ENCODE measurements at regions of chr7 and their contacts with region 1.

Region 1: GRCh38 chr7:158903897-158904541 is 47.7 kb downstream of the DYNC2I1 start:
- DNase-seq: no peak
- H3K4me3 ChIP-seq: no peak overlapping the region
- H3K27ac ChIP-seq: no peak overlapping the region
- H3K4me1 ChIP-seq: no peaks in the 10 kb centered on the region
- H3K27me3 ChIP-seq: no peaks in the 10 kb centered on the region
- CTCF ChIP-seq: no peak

Region 2: DNA sequence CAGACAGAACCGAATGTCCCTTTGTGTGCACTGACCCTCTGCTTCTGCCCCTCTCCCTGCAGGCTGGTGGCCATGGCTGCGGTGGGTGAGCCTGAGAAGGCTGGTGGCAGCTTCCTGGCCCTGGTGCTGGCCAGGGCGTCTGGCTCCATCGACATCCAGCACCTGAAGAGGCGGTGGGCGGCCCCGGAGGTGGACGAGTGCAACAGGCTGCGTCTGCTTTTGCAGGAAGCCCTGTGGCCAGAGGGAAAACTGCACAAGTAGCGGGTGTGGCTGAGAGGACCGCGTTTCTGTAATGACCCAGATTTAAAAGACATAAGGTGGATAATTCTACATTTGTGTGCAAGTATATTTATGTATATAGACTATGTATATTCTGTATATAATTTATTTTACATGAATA is 41.5 kb after region 1 on chr7:
- CTCF ChIA-PET with region 1: no interaction called
- dilution Hi-C with region 1: no loop called
- in situ Hi-C with region 1: no loop called
- intact Hi-C with region 1: no loop called
- DNase-seq: no peak
- H3K4me3 ChIP-seq: no peak overlapping the region
- H3K27ac ChIP-seq: no peak overlapping the region
- H3K4me1 ChIP-seq: no peaks in the 10 kb centered on the region
- H3K27me3 ChIP-seq: no peaks in the 10 kb centered on the region
- CTCF ChIP-seq: no peak

Region 3: DNA sequence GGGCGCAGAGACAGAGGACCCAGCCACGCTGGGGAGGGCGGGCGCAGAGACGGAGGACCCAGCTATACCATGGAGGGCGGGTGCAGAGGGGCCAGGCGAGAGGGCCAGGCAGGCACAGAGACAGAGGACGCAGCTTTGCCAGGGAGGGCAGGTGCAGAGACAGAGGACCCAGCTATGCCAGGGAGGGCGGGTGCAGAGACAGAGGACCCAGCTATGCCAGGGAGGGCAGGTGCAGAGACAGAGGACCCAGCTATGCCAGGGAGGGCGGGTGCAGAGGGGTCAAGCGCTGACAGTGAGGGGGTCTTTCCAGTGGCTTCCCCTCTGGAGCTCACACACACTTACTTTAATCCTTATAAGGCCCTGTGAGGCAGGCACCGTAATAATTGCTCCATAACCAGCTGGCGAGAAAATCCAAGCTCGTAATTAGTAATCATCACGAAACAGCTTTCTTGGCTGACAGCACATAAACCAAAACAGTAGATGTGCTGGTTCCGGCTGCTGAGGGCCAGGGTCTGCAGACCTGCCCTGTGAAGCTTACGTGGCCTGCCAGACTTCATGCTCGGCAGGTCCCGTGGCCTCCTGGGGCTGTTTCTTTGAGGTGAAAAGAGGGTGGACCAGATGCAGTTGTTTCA is 103.5 kb after region 1 on chr7:
- CTCF ChIA-PET with region 1: no interaction called
- dilution Hi-C with region 1: loop called (anchors 5 kb)
- in situ Hi-C with region 1: no loop called
- intact Hi-C with region 1: no loop called
- DNase-seq: no peak
- H3K4me3 ChIP-seq: no peak overlapping the region
- H3K27ac ChIP-seq: no peak overlapping the region
- H3K4me1 ChIP-seq: no peaks in the 10 kb centered on the region
- H3K27me3 ChIP-seq: no peaks in the 10 kb centered on the region
- CTCF ChIP-seq: no peak